ENCODE measurements at regions of chr12 and their contacts with region 1.

Region 1: DNA sequence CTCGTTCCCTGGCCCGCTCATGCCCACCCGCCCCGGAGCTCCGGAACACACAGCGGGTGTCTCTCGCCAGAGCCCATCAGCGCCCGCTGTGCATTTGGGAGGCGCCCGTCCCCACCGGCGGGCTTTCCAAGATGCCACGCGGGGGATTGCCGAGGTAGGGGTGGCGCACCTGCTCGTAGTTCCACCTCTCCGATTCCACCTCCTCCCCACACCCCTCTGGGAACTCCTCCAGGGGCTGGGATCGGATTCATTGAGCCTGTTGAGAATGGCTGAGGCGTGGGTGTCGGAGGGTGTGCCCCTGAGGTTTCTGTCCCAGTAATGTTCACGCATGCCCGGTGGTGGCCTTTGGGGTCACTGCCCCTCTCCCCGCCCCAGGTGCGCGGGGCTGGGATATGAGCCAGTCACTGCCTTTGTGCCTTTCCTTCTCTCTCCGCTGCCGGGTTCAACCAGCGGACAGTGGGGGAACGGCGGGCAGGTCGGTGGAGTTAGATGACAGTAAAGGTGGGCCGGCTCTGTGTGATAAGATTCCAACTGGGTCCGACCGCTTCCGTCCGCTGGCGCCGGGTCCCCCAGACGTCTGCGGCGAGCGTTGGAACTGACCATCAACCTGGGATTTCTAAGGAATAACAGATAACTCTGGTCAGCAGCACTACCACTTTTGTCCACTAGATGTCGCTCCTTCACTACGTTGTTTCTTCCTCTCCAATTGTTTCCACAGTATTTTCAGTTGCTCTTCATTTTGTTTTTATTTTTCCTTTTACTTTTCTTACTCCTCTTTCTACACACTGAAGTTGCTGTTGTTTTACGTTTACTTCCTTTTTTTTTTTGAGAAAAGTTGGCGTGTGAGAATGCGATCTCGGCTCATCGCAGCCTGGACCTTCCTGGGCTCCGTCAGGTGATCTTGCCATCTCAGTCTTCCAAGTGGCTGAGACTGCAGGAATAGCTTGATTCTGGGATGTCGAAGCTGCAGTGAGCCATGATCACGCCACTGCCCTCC is 178.1 kb upstream of the ALG10B start:
- DNase-seq: peak; percentile 40
- ATAC-seq: peak; percentile 65

Region 2: GRCh38 chr12:38316391-38317129 is 178.0 kb after region 1 on chr12 and contains the start of gene ALG10B:
- intact Hi-C with region 1: loop called (anchors 5 kb)
- DNase-seq: peak; percentile 92
- ATAC-seq: peak; percentile 100
- total RNA-seq, gene ALG10B: 5.6 TPM